Heart left ventricle (tissue), 16 donors: ENCODE measurements at regions of chr17 and their contacts with region 1.

Region 1: DNA sequence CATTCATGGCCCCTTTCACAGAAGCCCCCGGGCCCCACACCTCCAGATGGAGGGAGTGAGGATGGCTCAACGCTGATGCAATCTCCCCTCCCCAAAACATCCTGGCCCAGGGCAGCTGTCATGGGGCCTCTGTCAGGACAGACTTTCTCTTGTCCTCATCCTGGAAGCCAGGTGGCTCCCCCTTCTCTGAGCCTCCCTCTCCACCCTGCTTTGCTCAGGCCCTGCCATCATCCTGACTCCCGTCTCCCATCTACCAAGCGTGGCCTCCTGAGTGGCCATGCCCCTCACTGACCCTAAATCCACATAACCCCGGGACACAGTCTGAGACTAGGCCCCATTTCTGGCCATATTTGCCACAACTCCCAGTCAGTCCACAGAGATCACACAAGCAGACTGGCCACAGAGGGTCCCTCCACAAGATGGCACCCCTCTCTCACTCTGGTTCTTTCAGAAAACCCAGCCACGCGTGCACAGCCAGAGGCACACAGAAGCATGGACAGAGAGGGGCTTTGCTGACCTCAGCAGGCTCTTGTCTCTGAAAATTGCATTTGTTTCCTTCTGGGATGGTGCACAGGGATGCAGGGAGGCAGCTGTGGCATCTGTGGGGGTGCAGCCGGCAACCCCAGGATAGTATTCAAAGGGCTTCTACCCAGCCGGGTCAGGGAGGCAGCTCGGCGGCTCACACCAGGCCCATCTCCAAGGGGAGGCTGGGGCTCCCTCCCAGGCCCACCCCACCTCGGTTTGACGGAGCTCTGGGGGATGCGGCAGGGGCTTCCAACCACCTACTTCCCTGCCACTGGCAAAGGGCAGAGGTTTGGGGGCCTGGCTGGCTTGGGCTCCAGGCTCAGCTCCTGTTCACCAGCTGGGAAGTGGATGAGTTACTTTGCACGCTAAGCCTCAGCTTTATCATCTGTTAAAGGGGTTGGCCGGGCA is 16.9 kb downstream of the DOC2B start:
- DNase-seq: peak in 2 of 5 donors; percentile 49 to 54
- ATAC-seq: peak in 3 of 4 donors; percentile 68 to 82 (median 74)
- H3K4me3 ChIP-seq: no peak overlapping the region
- H3K27ac ChIP-seq: no peak overlapping the region
- H3K4me1 ChIP-seq: no peaks in the 10 kb centered on the region
- H3K27me3 ChIP-seq: no peaks in the 10 kb centered on the region
- CTCF ChIP-seq: peak; percentile 32 to 67 (median 56)
- POLR2A ChIP-seq: no peak

Region 2: DNA sequence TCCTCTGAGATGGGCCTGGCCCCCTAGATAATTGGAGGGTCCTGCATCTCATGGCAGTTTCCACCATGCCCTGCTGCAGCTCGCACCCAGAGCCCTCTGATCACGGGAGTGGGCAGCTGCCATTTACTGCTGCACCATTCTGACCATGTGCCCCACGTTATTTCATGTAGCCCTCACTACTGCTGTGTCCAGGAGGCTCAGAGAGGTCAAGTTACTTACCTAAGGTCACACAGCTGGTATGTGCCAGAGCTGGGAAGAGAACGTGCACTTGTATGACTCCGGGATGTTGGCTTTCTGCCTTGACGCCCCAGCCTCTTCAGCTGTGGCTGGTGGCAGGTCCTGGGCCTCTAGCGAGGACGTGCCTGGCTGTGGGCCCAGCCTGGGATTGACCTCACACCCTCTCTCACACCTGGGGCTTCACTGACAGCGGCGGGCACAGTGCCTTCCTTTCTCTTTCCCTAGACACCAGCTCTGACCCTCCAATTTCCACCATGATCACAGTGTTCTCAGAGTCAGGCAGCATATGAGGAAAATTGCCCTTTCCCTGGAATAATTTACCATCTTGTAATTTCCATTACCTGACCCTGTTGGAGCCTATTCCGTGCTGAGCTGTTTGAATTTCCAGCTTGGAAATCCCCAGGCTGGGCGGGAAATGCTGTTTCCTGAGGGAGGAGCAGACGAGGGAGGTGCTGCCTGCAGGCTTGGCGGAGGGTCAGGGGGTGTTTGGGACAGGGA is 35.4 kb after region 1 on chr17:
- intact Hi-C with region 1: no loop called
- DNase-seq: peak in 4 of 5 donors; percentile 45 to 71 (median 54)
- ATAC-seq: peak; percentile 51 to 90 (median 66)
- H3K4me3 ChIP-seq: peak overlapping the region in 9 of 12 donors; percentile 12 to 42 (median 29)
- H3K27ac ChIP-seq: peak overlapping the region in 9 of 12 donors; percentile 17 to 79 (median 52)
- H3K4me1 ChIP-seq: peaks cover 0 to 26% (median 14%) of the 10 kb centered on the region in 12 donors
- H3K27me3 ChIP-seq: peaks cover 0 to 37% (median 2%) of the 10 kb centered on the region in 9 donors
- CTCF ChIP-seq: no peak
- POLR2A ChIP-seq: no peak

Region 3: DNA sequence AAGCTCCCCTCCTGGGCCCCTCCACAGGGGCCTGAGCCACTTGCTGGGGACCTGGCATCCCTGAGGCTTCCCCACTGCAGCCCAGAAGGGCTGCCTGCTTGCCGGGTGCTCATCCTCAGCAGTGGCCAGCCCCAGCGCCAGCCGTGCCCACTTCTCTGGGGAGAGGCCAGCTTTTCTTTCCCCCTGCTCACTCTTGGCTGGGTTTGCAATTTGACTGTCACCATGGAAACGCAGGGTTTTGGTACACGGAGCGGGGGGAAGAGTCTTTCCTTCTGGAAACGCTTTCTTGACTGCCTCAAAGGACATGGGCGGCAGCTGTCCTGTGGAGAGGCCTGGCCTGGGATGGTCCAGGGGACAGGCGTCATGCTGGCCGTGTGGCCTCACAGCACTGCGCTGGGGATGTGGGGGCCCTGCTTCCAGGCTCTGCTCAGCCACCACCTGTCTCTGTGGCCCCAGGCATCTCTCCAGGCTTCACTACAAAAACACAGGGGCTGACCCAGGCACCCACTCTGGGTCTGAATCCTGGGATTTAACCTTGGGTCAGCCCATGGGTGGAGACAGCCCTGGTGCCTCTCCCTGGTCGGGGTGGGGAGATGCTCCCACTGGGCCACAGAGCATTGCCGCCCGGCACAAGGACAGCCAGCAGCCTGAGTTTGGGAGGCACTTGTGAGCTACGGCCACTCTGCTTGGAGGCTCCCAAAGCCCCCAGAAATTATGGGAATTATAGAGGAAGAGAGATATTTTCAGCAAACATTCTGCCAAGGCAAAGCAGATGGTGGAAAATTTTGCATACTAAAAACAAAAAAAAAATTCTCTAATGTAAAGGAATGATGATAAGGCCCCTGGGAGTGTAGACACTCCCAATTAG is 62.7 kb after region 1 on chr17:
- intact Hi-C with region 1: no loop called
- DNase-seq: peak in 4 of 5 donors; percentile 14 to 56 (median 22)
- ATAC-seq: peak in 3 of 4 donors; percentile 15 to 48 (median 21)
- H3K4me3 ChIP-seq: no peak overlapping the region
- H3K27ac ChIP-seq: peak overlapping the region in 5 of 12 donors; percentile 2 to 61 (median 20)
- H3K4me1 ChIP-seq: peaks cover 0 to 31% (median 5%) of the 10 kb centered on the region in 12 donors
- H3K27me3 ChIP-seq: peaks cover 0 to 5% (median 0%) of the 10 kb centered on the region in 9 donors
- CTCF ChIP-seq: no peak
- POLR2A ChIP-seq: no peak

Region 4: DNA sequence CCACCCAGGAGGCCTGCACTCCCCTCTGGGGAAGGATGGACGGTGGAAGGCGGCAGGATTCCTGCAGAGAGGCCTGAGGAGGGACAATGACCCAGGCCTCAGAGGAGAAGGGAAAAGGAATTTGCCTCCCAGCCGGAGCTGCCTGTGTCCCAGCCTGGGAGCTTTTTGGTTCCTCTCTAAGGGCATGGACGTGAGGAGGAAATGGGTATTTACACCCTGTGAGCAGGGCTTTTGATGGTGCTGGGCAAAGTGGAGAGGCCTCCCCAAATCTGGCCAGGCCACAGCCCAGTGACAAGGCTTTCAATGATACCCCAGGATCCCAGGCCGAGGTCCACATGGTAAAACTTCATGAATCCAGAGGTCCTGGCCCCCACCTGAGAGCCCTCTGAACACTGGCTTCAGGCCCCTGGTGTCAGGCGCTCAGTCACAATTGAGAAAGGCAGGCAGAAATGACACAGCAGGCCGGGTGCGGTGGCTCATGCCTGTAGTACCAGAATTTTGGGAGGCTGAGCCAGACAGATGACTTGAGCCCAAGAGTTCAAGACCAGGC is 72.9 kb after region 1 on chr17:
- intact Hi-C with region 1: no loop called
- DNase-seq: peak in 4 of 5 donors; percentile 3 to 33 (median 10)
- ATAC-seq: no peak
- H3K4me3 ChIP-seq: no peak overlapping the region
- H3K27ac ChIP-seq: no peak overlapping the region
- H3K4me1 ChIP-seq: peaks cover 0 to 12% (median 2%) of the 10 kb centered on the region in 12 donors
- H3K27me3 ChIP-seq: no peaks in the 10 kb centered on the region
- CTCF ChIP-seq: no peak
- POLR2A ChIP-seq: no peak

Region 5: DNA sequence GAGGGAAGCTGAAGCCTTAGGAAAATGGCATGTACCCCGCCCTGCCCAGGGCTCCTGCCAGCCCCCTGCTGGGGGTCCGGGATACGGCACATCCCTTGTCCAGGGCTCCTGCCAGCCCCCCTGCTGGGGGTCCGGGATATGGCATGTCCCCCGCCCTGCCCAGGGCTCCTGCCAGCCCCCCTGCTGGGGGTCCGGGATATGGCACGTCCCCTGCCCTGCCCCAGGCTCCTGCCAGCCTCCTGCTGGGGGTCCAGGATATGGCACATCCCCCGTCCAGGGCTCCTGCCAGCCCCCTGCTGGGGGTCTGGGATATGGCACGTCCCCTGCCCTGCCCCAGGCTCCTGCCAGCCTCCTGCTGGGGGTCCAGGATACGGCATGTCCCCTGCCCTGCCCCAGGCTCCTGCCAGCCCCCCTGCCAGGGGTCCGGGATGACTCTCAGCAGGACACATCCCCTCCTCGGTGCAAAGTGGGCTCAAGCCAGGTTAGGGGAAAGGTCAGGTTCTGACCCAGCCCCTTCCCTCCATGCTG is 144.9 kb after region 1 on chr17:
- intact Hi-C with region 1: loop called in 1 of 10 experiments (anchors 5 kb)
- DNase-seq: peak in 3 of 5 donors; percentile 25 to 59 (median 26)
- ATAC-seq: peak in 2 of 4 donors; percentile 40 to 58
- H3K4me3 ChIP-seq: no peak overlapping the region
- H3K27ac ChIP-seq: peak overlapping the region in 1 of 12 donors; percentile 9
- H3K4me1 ChIP-seq: peaks cover 0 to 13% (median under 1%) of the 10 kb centered on the region in 12 donors
- H3K27me3 ChIP-seq: no peaks in the 10 kb centered on the region
- CTCF ChIP-seq: peak; percentile 38 to 69 (median 51)
- POLR2A ChIP-seq: no peak

Region 6: GRCh38 chr17:700504-701094 is 536.0 kb after region 1 on chr17:
- intact Hi-C with region 1: loop called in 1 of 10 experiments (anchors 5 kb)
- DNase-seq: no peak
- ATAC-seq: peak in 2 of 4 donors; percentile 38 to 57
- H3K4me3 ChIP-seq: no peak overlapping the region
- H3K27ac ChIP-seq: no peak overlapping the region
- H3K4me1 ChIP-seq: peaks cover 0 to 25% (median 3%) of the 10 kb centered on the region in 12 donors
- H3K27me3 ChIP-seq: no peaks in the 10 kb centered on the region
- CTCF ChIP-seq: peak; percentile 61 to 86 (median 78)
- POLR2A ChIP-seq: no peak